Activated T-helper 1 cell treated with anti-CD3 and anti-CD28 coated beads, Interleukin-12 subunit alpha, Interleukin-12 subunit beta, Interleukin-2, Interleukin-4 antibody, amounts not matched to agents 30 ng/mL and 10 ng/mL and 1 ng/mL, durations not matched to agents 14 hours and 24 hours and 36 hours (primary cell): ENCODE measurements at regions of chr7 and their contacts with region 1.

Region 1: GRCh38 chr7:105013221-105013815 is 687 bp upstream of the KMT2E start:
- DNase-seq: peak; percentile 92
- H3K4me3 Mint-ChIP-seq: peak overlapping the region; percentile 99
- H3K27ac Mint-ChIP-seq: peak overlapping the region; percentile 96
- H3K4me1 Mint-ChIP-seq: peaks cover 43% of the 10 kb centered on the region
- H3K27me3 Mint-ChIP-seq: peaks cover 3% of the 10 kb centered on the region

Region 2: DNA sequence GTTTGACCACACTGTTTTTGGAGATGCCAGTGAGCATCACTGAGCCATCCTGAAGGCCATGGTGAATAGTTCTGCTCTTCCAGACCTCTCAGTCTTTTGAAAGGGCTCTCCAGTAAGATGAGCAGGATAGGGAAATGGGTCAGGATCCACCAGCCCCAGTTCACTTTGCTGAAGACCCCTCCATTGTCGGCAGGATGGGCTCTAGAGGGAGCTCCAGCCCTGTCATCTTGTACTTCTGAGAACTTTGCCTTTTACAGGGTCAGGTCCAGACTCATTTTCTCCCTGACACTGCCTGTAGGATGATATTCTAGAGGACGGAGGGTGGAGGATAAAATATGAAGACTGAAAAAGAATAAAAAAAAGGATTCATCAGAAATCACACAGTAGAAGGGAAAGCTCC is 671.8 kb before region 1 on chr7:
- intact Hi-C with region 1: no loop called
- DNase-seq: no peak
- H3K4me3 Mint-ChIP-seq: no peak overlapping the region
- H3K27ac Mint-ChIP-seq: no peak overlapping the region
- H3K4me1 Mint-ChIP-seq: no peaks in the 10 kb centered on the region
- H3K27me3 Mint-ChIP-seq: peaks cover 6% of the 10 kb centered on the region

Region 3: GRCh38 chr7:104943502-104944343 is 69.6 kb before region 1 on chr7:
- intact Hi-C with region 1: loop called (anchors 1 kb)
- DNase-seq: peak; percentile 70
- H3K4me3 Mint-ChIP-seq: peak overlapping the region; percentile 96
- H3K27ac Mint-ChIP-seq: peak overlapping the region; percentile 100
- H3K4me1 Mint-ChIP-seq: peaks cover 72% of the 10 kb centered on the region
- H3K27me3 Mint-ChIP-seq: peaks cover 2% of the 10 kb centered on the region

Region 4: GRCh38 chr7:104983578-104984539 is 29.5 kb before region 1 on chr7:
- intact Hi-C with region 1: loop called (anchors 1 kb)
- DNase-seq: peak; percentile 82
- H3K4me3 Mint-ChIP-seq: peak overlapping the region; percentile 99
- H3K27ac Mint-ChIP-seq: peak overlapping the region; percentile 100
- H3K4me1 Mint-ChIP-seq: peaks cover 76% of the 10 kb centered on the region
- H3K27me3 Mint-ChIP-seq: no peaks in the 10 kb centered on the region

Region 5: DNA sequence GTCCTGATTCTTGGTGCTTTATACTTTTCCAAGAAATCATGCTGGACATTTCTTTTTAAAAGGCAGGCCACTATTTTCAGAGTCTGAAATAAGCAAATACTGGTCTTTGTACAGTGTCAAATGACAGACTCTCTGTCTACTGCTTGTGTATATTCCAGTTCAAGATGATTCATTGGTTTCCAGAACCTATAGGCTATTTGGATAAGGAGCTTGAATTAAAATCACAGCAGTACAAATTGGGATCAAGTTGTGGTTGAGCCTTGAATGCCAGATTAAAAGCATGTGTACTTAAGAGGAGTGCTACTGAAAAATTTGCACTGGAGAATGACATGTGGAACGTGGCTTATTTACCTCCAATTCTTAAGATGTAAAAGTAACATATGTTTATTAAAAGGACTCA is 11.4 kb after region 1 on chr7:
- intact Hi-C with region 1: loop called (anchors 1 kb)
- DNase-seq: no peak
- H3K4me3 Mint-ChIP-seq: no peak overlapping the region
- H3K27ac Mint-ChIP-seq: no peak overlapping the region
- H3K4me1 Mint-ChIP-seq: peaks cover 84% of the 10 kb centered on the region
- H3K27me3 Mint-ChIP-seq: no peaks in the 10 kb centered on the region

Region 6: DNA sequence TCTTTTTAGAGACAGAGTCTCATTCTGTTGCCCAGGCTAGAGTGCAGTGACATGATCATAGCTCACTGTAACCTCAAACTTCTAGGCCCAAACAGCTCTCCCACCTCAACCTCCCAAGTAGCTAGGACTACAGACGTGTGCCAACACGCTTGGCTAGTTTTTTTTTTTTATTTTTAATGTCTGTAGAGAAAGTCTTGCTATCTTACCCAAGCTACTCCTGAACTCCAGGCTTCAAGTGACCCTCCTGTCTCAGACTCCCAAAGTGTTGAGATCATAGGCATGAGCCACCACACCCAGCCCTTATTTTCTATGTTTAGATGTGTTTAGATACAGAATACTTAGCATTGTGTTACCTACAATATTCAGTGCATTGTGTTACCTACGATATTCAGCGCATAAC is 47.1 kb after region 1 on chr7:
- intact Hi-C with region 1: loop called (anchors 2 kb)
- DNase-seq: no peak
- H3K4me3 Mint-ChIP-seq: no peak overlapping the region
- H3K27ac Mint-ChIP-seq: no peak overlapping the region
- H3K4me1 Mint-ChIP-seq: peaks cover 61% of the 10 kb centered on the region
- H3K27me3 Mint-ChIP-seq: no peaks in the 10 kb centered on the region

Region 7: GRCh38 chr7:105346593-105347322 is 333.4 kb after region 1 on chr7:
- intact Hi-C with region 1: loop called (anchors 5 kb)
- DNase-seq: peak; percentile 35
- H3K4me3 Mint-ChIP-seq: peak overlapping the region; percentile 42
- H3K27ac Mint-ChIP-seq: peak overlapping the region; percentile 52
- H3K4me1 Mint-ChIP-seq: peaks cover 40% of the 10 kb centered on the region
- H3K27me3 Mint-ChIP-seq: no peaks in the 10 kb centered on the region

Region 8: GRCh38 chr7:105365541-105366534 is 352.5 kb after region 1 on chr7:
- intact Hi-C with region 1: no loop called
- DNase-seq: no peak
- H3K4me3 Mint-ChIP-seq: no peak overlapping the region
- H3K27ac Mint-ChIP-seq: no peak overlapping the region
- H3K4me1 Mint-ChIP-seq: no peaks in the 10 kb centered on the region
- H3K27me3 Mint-ChIP-seq: no peaks in the 10 kb centered on the region

Region 9: GRCh38 chr7:105531792-105532671 is 518.7 kb after region 1 on chr7 and contains the start of gene RINT1:
- intact Hi-C with region 1: loop called (anchors 2 kb)
- DNase-seq: peak; percentile 85
- H3K4me3 Mint-ChIP-seq: peak within 1 kb of the TSS; percentile 93
- H3K27ac Mint-ChIP-seq: peak within 1 kb of the TSS; percentile 95
- H3K4me1 Mint-ChIP-seq: peaks cover 21% of the 10 kb centered on the region
- H3K27me3 Mint-ChIP-seq: peaks cover 1% of the 10 kb centered on the region
- total RNA-seq, gene RINT1: 21.9 and 32.5 TPM in 2 replicates